ENCODE measurements at regions of chr5 and their contacts with region 1.

Region 1: DNA sequence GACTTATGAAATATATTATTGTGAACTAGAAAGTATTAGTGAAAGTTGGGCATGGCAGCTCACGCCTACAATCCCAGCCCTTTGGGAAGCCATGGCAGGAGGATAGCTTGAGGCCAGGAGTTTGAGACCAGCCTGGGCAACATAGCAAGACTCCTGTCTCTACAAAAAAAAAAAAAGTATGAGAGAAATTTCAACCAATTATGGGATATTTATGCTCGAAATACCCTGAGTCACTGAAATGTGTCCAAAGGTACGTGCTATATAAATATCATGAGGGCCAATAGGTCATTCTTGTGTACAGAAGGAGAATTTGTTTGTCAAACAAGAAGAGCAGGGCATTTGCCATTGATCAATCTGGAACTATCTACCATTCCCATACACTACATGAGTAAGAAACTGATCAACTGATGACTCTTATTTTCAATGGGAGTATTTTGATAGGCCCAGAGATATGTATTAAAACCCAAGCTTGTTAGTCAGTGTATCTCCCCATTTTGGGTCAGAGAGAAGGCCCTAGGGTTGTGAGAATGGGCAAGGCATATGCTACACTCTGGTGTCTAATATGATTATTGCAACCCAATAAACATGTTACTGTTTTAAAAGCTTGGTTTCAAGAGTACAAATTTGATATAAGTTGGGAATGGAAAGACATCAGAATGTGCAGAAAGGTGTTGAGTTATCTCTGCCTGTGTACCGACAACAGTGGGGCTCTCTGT is 21.7 kb upstream of the HOMER1 start:
- DNase-seq: no peak
- ATAC-seq: peak in 3 of 8 donors; percentile 48 to 53 (median 49)
- H3K4me3 ChIP-seq: no peak overlapping the region
- H3K27ac ChIP-seq: no peak overlapping the region
- H3K4me1 ChIP-seq: no peaks in the 10 kb centered on the region
- H3K27me3 ChIP-seq: no peaks in the 10 kb centered on the region
- CTCF ChIP-seq: peak in 7 of 9 donors; percentile 23 to 53 (median 49)

Region 2: GRCh38 chr5:79011219-79011836 is 524.3 kb before region 1 on chr5:
- intact Hi-C with region 1: loop called in 1 of 10 experiments (anchors 10 kb)
- DNase-seq: no peak
- ATAC-seq: no peak
- H3K4me3 ChIP-seq: no peak overlapping the region
- H3K27ac ChIP-seq: no peak overlapping the region
- H3K4me1 ChIP-seq: no peaks in the 10 kb centered on the region
- H3K27me3 ChIP-seq: peaks cover 0 to 4% (median 0%) of the 10 kb centered on the region in 7 donors
- CTCF ChIP-seq: no peak

Region 3: DNA sequence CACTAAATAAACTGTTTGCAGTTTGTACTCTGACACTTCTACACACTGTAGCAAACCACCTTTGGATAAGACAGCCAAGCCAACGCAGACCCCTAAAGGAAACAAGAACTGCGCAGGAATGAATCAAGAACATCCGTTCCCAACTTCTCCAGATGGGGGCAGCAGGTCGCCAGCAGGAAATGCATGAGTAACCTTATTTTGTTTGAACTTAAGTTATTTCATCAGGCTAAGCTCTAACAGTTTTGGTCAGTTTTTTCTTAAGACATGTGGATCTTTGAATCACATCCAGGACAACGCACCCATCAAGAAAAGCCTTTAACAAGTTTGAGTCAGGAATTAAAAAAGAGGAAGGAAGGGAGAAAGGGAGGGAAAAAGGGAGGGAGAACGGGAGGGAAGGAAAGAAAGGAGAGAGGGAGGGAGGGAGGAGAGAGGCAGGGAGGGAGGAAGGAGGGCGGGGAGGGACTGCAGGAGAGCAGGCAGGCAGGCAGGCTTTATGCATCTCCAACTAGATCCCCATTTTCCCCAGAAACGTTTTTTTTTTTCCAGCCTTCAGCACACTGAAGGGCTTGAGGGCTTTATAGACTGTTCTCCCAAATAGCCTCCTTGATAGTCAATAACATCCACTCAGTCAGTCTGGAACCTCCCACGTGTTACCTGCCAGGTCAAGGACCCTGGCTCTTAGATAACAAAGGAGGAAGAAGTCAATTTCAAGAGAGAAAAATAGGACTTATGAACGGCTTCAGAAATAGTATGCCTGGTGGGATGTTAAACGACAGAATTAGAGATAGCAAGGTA is 401.8 kb before region 1 on chr5:
- intact Hi-C with region 1: loop called in 7 of 10 experiments (anchors 5 to 10 kb)
- DNase-seq: peak; percentile 34 to 60
- ATAC-seq: peak; percentile 34 to 82 (median 70)
- H3K4me3 ChIP-seq: peak overlapping the region in 8 of 10 donors; percentile 19 to 49 (median 34)
- H3K27ac ChIP-seq: peak overlapping the region in 5 of 10 donors; percentile 5 to 60 (median 31)
- H3K4me1 ChIP-seq: peaks cover 0 to 13% (median 9%) of the 10 kb centered on the region in 9 donors
- H3K27me3 ChIP-seq: no peaks in the 10 kb centered on the region
- CTCF ChIP-seq: peak; percentile 59 to 77 (median 68)

Region 4: DNA sequence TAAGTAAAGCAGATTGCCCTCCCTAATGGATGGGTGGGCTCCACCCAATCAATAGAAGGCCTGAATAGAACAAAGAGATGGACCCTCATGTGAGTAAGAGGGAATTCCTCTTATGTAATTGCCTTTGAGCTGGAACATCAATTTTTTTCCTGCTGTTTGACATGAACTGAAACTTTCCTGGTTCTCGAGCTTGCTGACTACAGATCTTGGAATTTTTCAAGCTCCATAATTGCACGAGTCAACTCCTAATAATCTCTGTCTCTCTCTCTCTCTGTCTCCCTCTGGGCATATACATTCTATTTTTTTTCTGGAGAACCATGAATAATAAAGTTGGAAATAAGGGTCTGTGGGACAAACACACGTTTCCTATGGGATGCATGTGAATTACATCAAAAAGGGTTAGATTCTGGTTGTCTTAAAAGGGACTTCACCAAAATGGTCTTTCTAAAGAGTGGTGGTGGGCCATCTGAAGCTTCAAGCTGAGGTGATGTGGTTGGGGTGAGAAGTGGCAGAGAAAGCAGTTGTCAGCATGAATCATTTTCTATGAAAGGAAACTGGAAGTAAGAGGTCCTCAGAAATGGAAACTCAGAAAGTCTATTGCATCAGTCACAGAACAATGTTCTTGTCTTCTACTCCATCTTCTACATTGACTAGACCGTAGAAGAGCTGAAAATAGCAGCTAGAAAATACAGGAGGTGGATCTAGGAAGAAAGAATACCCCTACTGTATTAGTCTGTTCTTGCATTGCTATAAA is 25.3 kb after region 1 on chr5:
- intact Hi-C with region 1: no loop called
- DNase-seq: no peak
- ATAC-seq: no peak
- H3K4me3 ChIP-seq: no peak overlapping the region
- H3K27ac ChIP-seq: peak overlapping the region in 1 of 10 donors; percentile 52
- H3K4me1 ChIP-seq: peaks cover 0 to 27% (median 0%) of the 10 kb centered on the region in 9 donors
- H3K27me3 ChIP-seq: no peaks in the 10 kb centered on the region
- CTCF ChIP-seq: no peak